GM12878 (cell line): ENCODE measurements at regions of chr11 and their contacts with region 1.

Region 1: DNA sequence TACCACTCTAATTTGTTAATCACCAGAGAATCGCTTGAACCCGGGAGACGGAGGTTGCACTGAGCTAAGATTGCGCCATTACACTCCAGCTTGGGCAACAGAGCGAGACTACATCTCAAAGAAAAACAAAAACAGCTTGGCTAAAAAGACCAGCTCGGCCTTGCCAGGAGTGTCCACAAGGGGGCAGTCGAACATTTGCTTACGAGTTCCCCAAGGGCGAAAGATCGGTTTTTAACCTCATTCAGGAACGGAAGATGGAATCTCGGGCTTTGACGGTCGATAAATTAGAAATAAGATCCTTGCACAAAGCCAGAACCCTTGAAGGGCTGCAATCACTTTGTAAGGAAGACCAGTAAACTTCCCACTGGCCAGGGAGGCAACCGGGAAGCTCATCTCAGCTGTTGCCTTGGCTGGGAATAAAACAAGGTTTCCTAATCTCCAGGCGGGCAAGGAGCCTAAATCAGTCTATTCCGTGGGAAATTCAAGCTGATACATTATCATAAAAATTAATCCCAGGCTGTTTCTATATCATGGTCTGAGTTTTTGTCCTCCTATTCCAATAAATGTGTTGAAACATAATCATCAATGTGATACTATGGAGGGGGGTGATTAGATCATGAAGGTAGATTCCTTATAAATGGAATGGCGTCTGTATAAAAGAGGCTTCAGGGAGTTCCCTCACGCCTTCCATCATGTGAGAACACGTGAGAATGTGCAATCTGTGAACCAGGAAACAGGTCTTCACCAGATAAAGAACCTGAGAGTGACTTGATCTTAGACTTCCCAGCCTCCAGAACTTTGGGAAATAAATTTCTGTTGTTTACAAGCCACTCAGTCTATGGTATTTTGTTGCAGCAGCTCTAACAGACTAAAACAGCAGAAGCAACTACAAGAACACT is 14.9 kb upstream of the SLC29A2 start:
- DNase-seq: peak; percentile 41
- ATAC-seq: peak; percentile 93
- H3K4me3 ChIP-seq: no peak overlapping the region
- H3K27ac ChIP-seq: no peak overlapping the region
- H3K4me1 ChIP-seq: peaks cover 2% of the 10 kb centered on the region; the same call in 1 of the 2 replicates
- H3K27me3 ChIP-seq: no peaks in the 10 kb centered on the region
- CTCF ChIP-seq: peak; percentile 84 to 98 (median 94)
- EP300 ChIP-seq: no peak
- POLR2A ChIP-seq: no peak
- RAD21 ChIP-seq: peak; percentile 62

Region 2: GRCh38 chr11:66336234-66337102 is 50.0 kb before region 1 on chr11 and contains the start of gene RIN1:
- CTCF ChIA-PET with region 1: interaction called, 15 read pairs
- POLR2A ChIA-PET with region 1: no interaction called
- RAD21 ChIA-PET with region 1: interaction called, 8 read pairs
- SMC1A ChIA-PET with region 1: interaction called, 5 read pairs
- in situ Hi-C with region 1: no loop called
- intact Hi-C with region 1: no loop called
- DNase-seq: peak; percentile 83
- ATAC-seq: peak; percentile 94
- H3K4me3 ChIP-seq: no peak within 1 kb of the TSS
- H3K27ac ChIP-seq: no peak within 1 kb of the TSS
- H3K4me1 ChIP-seq: peaks cover 21% of the 10 kb centered on the region
- H3K27me3 ChIP-seq: no peaks in the 10 kb centered on the region
- CTCF ChIP-seq: peak; percentile 23 to 57 (median 30); a peak in 4 of 6 replicates
- EP300 ChIP-seq: peak; percentile 57 to 64; a peak in 3 of 4 replicates
- POLR2A ChIP-seq: peak; percentile 41
- RAD21 ChIP-seq: peak; percentile 46
- polyA plus RNA-seq, gene RIN1: 0.04 TPM in 1 of 2 experiments, not detected in the other

Region 3: DNA sequence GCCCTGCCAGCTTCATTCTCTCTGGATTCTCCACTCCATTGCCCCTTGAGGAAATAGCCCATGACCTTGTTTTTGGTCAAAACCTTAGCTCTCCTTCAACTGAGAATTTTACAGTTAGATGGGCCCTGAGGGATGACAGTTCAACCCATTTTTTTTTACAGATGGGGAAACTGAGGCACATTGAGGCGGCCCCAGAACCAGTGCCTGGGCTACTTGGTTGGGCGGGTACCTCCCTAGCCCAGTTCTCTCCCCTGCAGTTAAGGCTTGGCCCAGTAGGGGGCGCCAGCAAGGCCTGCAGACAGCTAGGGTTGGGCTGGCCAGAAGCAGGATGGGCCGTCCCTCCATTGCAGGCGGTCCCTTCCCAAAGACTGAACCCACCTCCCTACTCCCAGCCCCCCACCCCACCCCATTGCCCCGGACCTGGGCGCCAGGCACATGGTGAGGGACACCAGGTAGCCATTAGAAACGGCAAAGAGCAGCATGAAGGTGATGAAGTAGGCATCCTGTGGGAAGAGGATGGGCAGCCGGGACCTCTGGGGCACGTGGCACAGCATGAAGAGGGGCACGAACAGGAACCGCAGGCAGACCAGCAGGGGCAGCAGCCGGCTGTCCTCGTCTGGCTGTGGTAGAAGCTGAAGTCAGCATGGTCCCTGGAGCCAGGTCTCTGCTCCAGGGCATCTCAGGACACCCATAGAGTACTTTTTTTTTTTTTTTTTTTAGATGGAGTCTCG is 22.4 kb before region 1 on chr11:
- CTCF ChIA-PET with region 1: interaction called, 91 read pairs
- POLR2A ChIA-PET with region 1: interaction called, 6 read pairs
- RAD21 ChIA-PET with region 1: interaction called, 10 read pairs
- SMC1A ChIA-PET with region 1: interaction called, 9 read pairs
- in situ Hi-C with region 1: no loop called
- intact Hi-C with region 1: no loop called
- DNase-seq: no peak
- ATAC-seq: peak; percentile 88
- H3K4me3 ChIP-seq: no peak overlapping the region
- H3K27ac ChIP-seq: no peak overlapping the region
- H3K4me1 ChIP-seq: no peaks in the 10 kb centered on the region
- H3K27me3 ChIP-seq: no peaks in the 10 kb centered on the region
- CTCF ChIP-seq: peak; percentile 54 to 95 (median 89)
- EP300 ChIP-seq: no peak
- POLR2A ChIP-seq: no peak
- RAD21 ChIP-seq: 0 out of 2 replicates have a peak, but pooled peaks have one; percentile 14

Region 4: DNA sequence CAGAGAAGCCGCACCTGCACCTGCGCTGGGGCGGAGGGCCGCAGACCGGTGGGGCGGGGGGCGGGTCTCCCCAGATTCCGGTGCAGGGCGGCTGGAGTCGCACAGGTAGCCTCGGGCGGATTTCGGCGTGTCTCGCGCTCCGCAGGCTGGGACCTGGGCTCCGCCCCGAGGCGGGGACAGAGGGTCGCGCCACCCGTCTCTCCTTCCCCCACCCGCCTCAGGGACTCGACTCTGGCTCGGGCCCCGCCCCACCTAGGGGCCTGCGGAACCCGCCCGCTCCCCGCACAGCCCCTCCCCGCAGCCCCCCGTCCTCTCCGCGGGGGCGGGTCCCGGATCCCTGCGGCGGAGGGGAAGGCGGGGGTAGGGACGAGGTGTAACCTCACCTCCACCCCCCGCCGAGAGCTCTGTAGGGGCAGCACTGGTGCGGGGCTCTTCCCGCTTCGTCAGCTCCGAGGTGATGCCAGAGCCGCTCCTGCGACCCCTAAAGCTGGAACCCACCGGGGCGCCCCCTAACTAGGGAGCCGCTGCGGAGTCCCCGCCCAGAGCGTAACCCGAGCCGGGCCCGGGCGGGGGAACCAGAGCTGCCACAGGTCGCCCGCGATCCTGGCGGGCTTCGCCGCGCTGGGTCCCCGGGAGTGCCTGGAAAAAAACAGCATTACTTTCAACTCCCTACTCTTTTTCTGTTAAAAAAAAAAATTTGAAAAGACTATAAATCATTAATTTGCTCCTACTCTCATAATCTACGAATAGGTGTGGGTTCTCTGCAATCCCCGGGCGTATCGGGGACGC is 14.6 kb before region 1 on chr11 and contains the start of gene SLC29A2:
- CTCF ChIA-PET with region 1: interaction called, 91 read pairs
- POLR2A ChIA-PET with region 1: interaction called, 12 read pairs
- RAD21 ChIA-PET with region 1: interaction called, 21 read pairs
- SMC1A ChIA-PET with region 1: interaction called, 9 read pairs
- in situ Hi-C with region 1: no loop called
- intact Hi-C with region 1: no loop called
- DNase-seq: peak; percentile 61
- ATAC-seq: peak; percentile 91
- H3K4me3 ChIP-seq: peak within 1 kb of the TSS; percentile 90
- H3K27ac ChIP-seq: peak within 1 kb of the TSS; percentile 69
- H3K4me1 ChIP-seq: peaks cover 4% of the 10 kb centered on the region; the same call in 1 of the 2 replicates
- H3K27me3 ChIP-seq: no peaks in the 10 kb centered on the region; a peak in 1 of 4 replicates
- CTCF ChIP-seq: no peak
- EP300 ChIP-seq: no peak
- POLR2A ChIP-seq: no peak; the same call in none of the 2 replicates
- RAD21 ChIP-seq: no peak
- polyA plus RNA-seq, gene SLC29A2: 0.27 to 0.44 TPM

Region 5: DNA sequence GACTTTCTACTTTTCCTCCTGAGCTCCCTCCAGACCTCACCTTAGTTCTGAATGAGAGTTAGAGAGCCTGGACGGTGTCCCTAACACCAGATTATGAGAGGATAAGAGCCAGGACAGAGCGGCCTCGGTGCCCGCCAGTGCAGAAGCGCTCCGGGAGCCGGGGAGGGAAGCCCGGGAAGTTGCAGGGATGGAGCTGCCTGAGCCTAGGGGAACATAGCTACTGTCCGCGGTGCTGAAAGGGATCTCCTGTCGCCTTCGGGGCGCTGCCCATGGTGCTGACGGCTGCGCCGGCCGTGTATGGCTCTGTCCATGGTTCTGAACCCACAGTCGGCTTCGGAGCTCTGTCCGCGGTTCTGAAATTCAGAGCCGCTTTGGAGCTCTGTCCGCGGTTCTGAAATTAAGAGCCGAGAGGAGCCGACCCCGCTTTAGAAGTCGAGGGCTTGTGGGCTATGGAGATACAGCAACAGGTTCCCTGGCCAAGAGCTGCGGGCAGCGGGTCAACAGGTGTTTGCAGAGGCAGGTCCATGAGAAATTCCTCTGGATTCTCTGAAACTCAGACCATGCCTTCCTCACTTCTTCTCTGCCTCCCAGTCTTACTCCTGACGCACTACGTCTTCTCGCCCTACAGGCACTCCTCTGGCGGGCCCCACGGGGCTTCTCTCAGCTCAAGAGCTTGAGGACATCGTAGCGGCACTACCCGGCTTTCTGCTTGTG is 35.2 kb after region 1 on chr11:
- CTCF ChIA-PET with region 1: interaction called, 11 read pairs
- POLR2A ChIA-PET with region 1: no interaction called
- RAD21 ChIA-PET with region 1: interaction called, 5 read pairs
- SMC1A ChIA-PET with region 1: no interaction called
- in situ Hi-C with region 1: no loop called
- intact Hi-C with region 1: no loop called
- DNase-seq: peak; percentile 37
- ATAC-seq: peak; percentile 57
- H3K4me3 ChIP-seq: no peak overlapping the region
- H3K27ac ChIP-seq: no peak overlapping the region
- H3K4me1 ChIP-seq: peaks cover 3% of the 10 kb centered on the region; the same call in 1 of the 2 replicates
- H3K27me3 ChIP-seq: peaks cover 0 to 8% of the 10 kb centered on the region in 2 experiments; a peak in 1 of 4 replicates
- CTCF ChIP-seq: no peak
- EP300 ChIP-seq: no peak
- POLR2A ChIP-seq: no peak
- RAD21 ChIP-seq: no peak

Region 6: GRCh38 chr11:66429983-66430602 is 43.7 kb after region 1 on chr11:
- CTCF ChIA-PET with region 1: interaction called, 10 read pairs
- POLR2A ChIA-PET with region 1: no interaction called
- RAD21 ChIA-PET with region 1: interaction called, 4 read pairs
- SMC1A ChIA-PET with region 1: interaction called, 3 read pairs
- in situ Hi-C with region 1: no loop called
- intact Hi-C with region 1: no loop called
- DNase-seq: no peak
- ATAC-seq: peak; percentile 93
- H3K4me3 ChIP-seq: no peak overlapping the region
- H3K27ac ChIP-seq: no peak overlapping the region
- H3K4me1 ChIP-seq: no peaks in the 10 kb centered on the region
- H3K27me3 ChIP-seq: no peaks in the 10 kb centered on the region
- CTCF ChIP-seq: peak; percentile 78 to 88 (median 79)
- EP300 ChIP-seq: no peak
- POLR2A ChIP-seq: no peak
- RAD21 ChIP-seq: peak; percentile 68

Region 7: DNA sequence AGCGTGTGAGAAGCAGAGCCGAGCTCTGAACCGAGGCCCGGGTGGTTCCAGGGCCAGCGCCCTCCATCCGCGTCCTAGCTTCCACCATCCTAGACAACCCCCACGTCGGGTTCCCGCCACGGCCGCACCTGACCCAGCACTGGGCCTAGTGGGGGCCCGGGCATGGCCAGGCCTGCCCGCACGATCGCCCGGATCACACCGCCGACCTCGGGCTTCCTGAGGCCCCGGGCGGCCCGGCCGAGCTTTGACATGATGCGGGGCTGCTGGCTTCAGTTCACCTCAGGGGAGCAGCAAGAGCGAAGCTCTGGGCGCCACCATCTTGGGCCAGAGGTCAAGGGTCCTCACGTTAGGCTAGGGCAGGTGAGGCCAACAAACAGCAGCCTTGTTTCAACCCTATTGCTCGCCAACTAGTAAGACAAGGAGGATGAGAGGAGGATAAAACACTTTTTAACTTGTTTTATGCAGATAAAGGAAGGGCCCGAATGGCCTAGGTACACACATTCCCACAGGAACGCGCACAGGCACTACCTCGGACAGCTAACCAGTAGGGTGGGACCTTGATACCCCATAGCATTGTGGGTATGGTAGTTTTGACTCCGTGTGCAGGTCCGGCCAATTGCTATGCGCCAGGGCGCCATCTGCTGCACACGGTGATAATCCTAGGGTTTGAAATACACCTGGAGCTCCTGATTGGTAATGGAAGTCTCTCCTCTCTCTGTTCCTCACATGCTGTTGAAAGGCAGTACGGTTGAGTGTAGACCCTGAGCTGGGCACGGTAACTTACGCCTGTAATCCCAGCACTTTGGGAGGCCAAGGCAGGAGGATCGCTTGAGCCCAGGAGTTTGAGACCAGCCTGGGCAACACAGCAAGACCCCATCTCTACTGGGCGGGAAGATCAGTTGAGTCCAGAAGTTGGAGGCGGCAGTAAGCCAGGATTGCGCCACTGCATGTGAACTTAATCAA is 52.4 kb after region 1 on chr11 and contains the start of gene MRPL11:
- CTCF ChIA-PET with region 1: interaction called, 29 read pairs
- POLR2A ChIA-PET with region 1: no interaction called
- RAD21 ChIA-PET with region 1: no interaction called
- SMC1A ChIA-PET with region 1: interaction called, 6 read pairs
- in situ Hi-C with region 1: no loop called
- intact Hi-C with region 1: no loop called
- DNase-seq: peak; percentile 95
- ATAC-seq: peak; percentile 99
- H3K4me3 ChIP-seq: peak within 1 kb of the TSS; percentile 98
- H3K27ac ChIP-seq: peak within 1 kb of the TSS; percentile 85
- H3K4me1 ChIP-seq: no peaks in the 10 kb centered on the region
- H3K27me3 ChIP-seq: no peaks in the 10 kb centered on the region; a peak in 1 of 4 replicates
- CTCF ChIP-seq: peak; percentile 66 to 91 (median 87)
- EP300 ChIP-seq: no peak
- POLR2A ChIP-seq: peak; percentile 82
- RAD21 ChIP-seq: peak; percentile 37; the same call in 1 of the 2 replicates
- polyA plus RNA-seq, gene MRPL11: 43.5 to 80.9 TPM

Region 8: GRCh38 chr11:66592457-66593302 is 206.3 kb after region 1 on chr11 and contains the starts of genes CCDC87 and CCS:
- CTCF ChIA-PET with region 1: no interaction called
- POLR2A ChIA-PET with region 1: no interaction called
- RAD21 ChIA-PET with region 1: no interaction called
- SMC1A ChIA-PET with region 1: no interaction called
- in situ Hi-C with region 1: no loop called
- intact Hi-C with region 1: no loop called
- DNase-seq: peak; percentile 84
- ATAC-seq: peak; percentile 98
- H3K4me3 ChIP-seq: peak within 1 kb of the TSS; percentile 85
- H3K27ac ChIP-seq: peak within 1 kb of the TSS; percentile 62
- H3K4me1 ChIP-seq: peaks cover 13% of the 10 kb centered on the region
- H3K27me3 ChIP-seq: no peaks in the 10 kb centered on the region
- CTCF ChIP-seq: peak; percentile 55 to 68 (median 56)
- EP300 ChIP-seq: no peak
- POLR2A ChIP-seq: peak; percentile 100
- RAD21 ChIP-seq: no peak
- polyA plus RNA-seq, gene CCDC87: 0.02 TPM in 1 of 2 experiments, not detected in the other
- polyA plus RNA-seq, gene CCS: 1.5 to 7.6 TPM

Region 9: DNA sequence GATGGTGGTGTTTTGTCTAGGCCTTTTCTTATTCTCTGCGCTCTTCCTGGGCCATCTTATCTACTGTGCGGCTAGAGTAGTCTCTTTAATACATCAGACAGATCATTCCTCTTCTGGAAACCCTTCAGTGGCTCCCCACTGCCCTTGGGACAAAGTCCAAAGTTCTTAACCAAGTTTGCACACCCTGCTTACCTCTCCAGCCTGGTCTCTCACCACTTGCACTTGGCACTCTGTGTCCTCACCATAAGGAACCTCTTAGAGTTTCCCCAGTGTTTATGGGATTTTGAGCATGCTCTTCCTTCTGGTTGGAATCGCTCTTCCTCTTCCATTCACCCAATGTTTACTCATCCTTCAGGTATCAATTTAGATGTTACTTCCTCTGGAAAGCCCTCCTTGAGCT is 347.8 kb after region 1 on chr11:
- CTCF ChIA-PET with region 1: no interaction called
- POLR2A ChIA-PET with region 1: no interaction called
- RAD21 ChIA-PET with region 1: no interaction called
- SMC1A ChIA-PET with region 1: no interaction called
- in situ Hi-C with region 1: no loop called
- intact Hi-C with region 1: no loop called
- DNase-seq: no peak
- ATAC-seq: no peak
- H3K4me3 ChIP-seq: no peak overlapping the region
- H3K27ac ChIP-seq: no peak overlapping the region
- H3K4me1 ChIP-seq: no peaks in the 10 kb centered on the region
- H3K27me3 ChIP-seq: peaks cover 0 to 4% of the 10 kb centered on the region in 2 experiments; a peak in 3 of 4 replicates
- CTCF ChIP-seq: no peak
- EP300 ChIP-seq: no peak
- POLR2A ChIP-seq: no peak
- RAD21 ChIP-seq: no peak

Region 10: DNA sequence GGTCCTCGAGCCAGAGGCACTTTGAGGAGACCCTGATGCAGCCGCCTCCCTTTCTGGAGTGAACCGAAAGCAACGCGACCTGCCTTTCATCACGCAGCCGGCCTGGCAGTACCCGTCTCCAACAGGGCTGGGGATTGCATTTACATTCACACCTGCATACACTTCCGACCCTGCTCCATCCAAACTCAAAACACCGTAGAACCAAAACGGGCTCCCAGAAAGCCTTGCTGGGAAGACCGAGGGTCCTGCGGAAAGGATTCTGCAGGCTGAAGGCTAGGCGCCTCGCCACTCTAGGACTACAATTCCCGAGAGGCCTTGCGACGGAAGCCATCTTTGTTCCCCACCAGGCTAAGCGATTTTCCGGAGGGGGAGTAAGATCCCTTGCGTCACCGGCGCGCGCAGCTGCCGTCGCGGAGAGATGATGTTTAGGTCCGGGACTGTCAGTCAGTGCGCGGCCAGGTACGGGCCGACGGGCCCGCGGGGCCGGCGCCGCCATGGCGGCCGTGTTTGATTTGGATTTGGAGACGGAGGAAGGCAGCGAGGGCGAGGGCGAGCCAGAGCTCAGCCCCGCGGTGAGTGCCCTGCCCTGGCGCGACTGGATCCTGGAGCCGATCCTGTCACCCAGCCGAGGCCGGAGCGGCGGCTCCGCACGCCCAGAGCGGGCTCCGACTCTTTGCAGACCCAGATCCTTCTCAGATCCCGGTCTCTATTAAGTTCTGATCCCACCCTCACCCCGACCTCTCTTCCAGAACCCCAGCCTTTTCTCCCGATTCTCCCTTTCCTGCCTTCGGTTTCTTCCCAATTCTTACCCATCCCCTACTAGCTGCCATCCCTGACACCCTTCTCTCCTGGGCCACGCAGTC is 1041.9 kb after region 1 on chr11 and contains the start of gene RPS6KB2:
- CTCF ChIA-PET with region 1: no interaction called
- POLR2A ChIA-PET with region 1: no interaction called
- RAD21 ChIA-PET with region 1: no interaction called
- SMC1A ChIA-PET with region 1: no interaction called
- in situ Hi-C with region 1: no loop called
- intact Hi-C with region 1: no loop called
- DNase-seq: peak; percentile 95
- ATAC-seq: peak; percentile 85
- H3K4me3 ChIP-seq: peak within 1 kb of the TSS; percentile 100
- H3K27ac ChIP-seq: peak within 1 kb of the TSS; percentile 69
- H3K4me1 ChIP-seq: no peaks in the 10 kb centered on the region; the same call in 1 of the 2 replicates
- H3K27me3 ChIP-seq: no peaks in the 10 kb centered on the region
- CTCF ChIP-seq: no peak
- EP300 ChIP-seq: no peak
- POLR2A ChIP-seq: peak; percentile 87
- RAD21 ChIP-seq: no peak
- polyA plus RNA-seq, gene RPS6KB2: 0.39 to 2.3 TPM